GM13977 (cell line): ENCODE measurements at regions of chr3 and their contacts with region 1.

Region 1: GRCh38 chr3:129058441-129059200 is 2.0 kb upstream of the GP9 start:
- DNase-seq: no peak
- CTCF ChIP-seq: no peak

Region 2: DNA sequence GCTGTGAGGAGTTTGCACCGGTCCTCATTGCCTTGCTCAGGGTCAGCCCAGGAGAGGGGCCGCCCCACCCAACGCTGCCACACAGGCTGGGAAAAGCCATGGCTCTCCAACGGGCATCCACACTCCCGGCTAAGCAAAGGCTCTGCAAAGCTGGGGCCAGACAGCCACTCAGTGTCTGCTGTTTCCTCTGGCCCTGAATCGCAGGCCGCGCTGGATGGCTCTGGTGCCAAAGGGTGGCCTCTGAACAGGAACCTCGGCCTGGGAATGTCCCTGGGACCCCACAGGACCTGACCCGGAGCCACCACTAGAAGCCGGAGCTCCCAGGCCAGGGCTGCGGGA is 450.9 kb before region 1 on chr3:
- in situ Hi-C with region 1: no loop called
- DNase-seq: no peak
- CTCF ChIP-seq: no peak

Region 3: GRCh38 chr3:129249276-129250065 is 190.8 kb after region 1 on chr3 and contains the start of gene COPG1:
- in situ Hi-C with region 1: loop called (anchors 10 kb)
- DNase-seq: peak; percentile 94
- CTCF ChIP-seq: no peak